Activated T-helper 1 cell treated with anti-CD3 and anti-CD28 coated beads, Interleukin-12 subunit alpha, Interleukin-12 subunit beta, Interleukin-2, Interleukin-4 antibody, amounts not matched to agents 30 ng/mL and 10 ng/mL and 1 ng/mL, durations not matched to agents 14 hours and 24 hours and 36 hours (primary cell): ENCODE measurements at regions of chr11 and their contacts with region 1.

Region 1: DNA sequence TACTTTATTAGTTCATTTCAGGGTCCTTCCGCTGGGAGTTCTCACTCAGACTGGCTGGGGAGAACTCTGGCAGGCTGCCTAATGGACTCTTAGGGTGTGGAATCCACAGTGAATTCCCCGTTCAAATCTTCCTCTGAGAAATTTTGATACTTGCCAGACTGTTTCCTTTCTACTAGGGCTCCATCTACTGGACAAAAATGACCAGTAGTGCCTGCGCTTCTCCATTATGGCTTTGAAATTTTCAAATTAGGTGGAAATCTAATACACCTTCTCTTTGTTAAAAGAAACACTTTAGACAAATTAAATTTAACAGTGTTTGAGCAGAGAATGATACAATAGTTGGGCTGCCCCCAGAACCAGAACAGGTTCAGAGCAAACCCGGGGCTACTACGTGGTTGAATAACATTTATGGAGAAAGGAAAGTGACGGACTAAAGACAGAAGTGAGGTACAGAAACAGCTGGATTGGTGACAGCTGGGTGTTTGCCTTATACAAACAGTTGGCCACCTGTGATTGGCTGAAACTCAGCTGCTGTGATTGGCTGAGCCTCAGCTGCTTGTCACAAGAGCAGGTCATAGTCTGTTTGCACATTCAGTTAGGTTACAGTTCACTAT is 52.9 kb upstream of the FDX1 start:
- DNase-seq: no peak
- H3K4me3 Mint-ChIP-seq: no peak overlapping the region
- H3K27ac Mint-ChIP-seq: no peak overlapping the region
- H3K4me1 Mint-ChIP-seq: peaks cover 40% of the 10 kb centered on the region
- H3K27me3 Mint-ChIP-seq: no peaks in the 10 kb centered on the region

Region 2: GRCh38 chr11:110092515-110093404 is 284.1 kb before region 1 on chr11 and contains the start of gene ZC3H12C:
- intact Hi-C with region 1: loop called (anchors 2 kb)
- DNase-seq: peak; percentile 47
- H3K4me3 Mint-ChIP-seq: peak within 1 kb of the TSS; percentile 87
- H3K27ac Mint-ChIP-seq: peak within 1 kb of the TSS; percentile 93
- H3K4me1 Mint-ChIP-seq: peaks cover 16% of the 10 kb centered on the region
- H3K27me3 Mint-ChIP-seq: peaks cover 56% of the 10 kb centered on the region
- total RNA-seq, gene ZC3H12C: 5.7 and 6.2 TPM in 2 replicates

Region 3: DNA sequence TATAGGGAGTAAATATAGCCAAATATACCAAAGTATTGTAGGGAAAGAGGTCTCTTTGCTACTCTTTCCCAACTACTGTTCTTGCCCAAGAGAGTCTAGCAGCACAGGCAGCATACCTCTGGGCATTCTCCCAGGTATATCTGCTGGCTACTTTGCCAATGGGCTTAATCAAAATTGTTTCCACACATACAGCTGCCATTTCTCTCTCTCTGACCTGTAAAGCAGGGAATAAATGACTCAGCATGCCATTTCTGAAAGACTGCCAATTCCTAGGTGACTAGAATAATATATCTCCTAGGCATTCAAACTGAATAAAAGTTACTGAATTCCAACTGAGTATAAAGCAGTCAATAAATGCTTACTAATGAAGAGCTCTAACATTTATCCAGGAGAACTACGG is 125.0 kb before region 1 on chr11:
- intact Hi-C with region 1: loop called (anchors 5 kb)
- DNase-seq: no peak
- H3K4me3 Mint-ChIP-seq: no peak overlapping the region
- H3K27ac Mint-ChIP-seq: peak overlapping the region; percentile 40
- H3K4me1 Mint-ChIP-seq: peaks cover 14% of the 10 kb centered on the region
- H3K27me3 Mint-ChIP-seq: no peaks in the 10 kb centered on the region

Region 4: GRCh38 chr11:110327508-110327907 is 49.3 kb before region 1 on chr11:
- intact Hi-C with region 1: loop called (anchors 1 kb)
- DNase-seq: no peak
- H3K4me3 Mint-ChIP-seq: peak overlapping the region; percentile 96
- H3K27ac Mint-ChIP-seq: peak overlapping the region; percentile 98
- H3K4me1 Mint-ChIP-seq: peaks cover 49% of the 10 kb centered on the region
- H3K27me3 Mint-ChIP-seq: no peaks in the 10 kb centered on the region

Region 5: DNA sequence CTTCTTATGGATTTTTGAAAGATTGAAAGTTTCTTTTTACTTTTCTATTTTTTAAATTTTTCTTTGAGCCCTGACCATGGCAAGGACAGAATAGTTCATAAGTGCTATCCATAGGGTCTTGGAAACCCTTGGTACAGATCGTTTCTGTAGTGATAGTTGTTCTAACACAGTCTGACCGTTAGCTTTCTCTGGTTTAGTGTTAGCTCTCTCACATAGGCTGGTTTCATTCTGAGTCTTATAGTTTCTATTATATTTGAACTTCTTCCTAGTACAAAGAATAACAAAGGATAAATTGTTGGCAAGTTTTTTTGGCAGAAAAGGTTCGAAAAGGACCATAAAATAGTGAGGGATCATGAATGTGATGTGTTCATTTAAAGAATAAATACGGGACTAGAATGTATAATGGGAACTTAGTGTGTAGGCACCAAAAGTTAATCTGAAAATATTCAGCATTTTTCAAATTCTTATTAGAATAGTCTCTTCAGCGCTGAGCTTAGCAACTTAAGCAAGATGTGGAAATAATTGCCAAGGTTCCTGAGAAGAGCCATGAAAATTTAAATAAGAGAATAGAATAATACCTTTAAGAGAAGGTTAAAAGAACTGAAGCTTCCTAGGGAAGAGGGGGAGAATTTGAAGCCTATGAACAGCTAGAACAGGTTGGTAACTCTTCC is 77.0 kb after region 1 on chr11:
- intact Hi-C with region 1: loop called (anchors 1 kb)
- DNase-seq: no peak
- H3K4me3 Mint-ChIP-seq: peak overlapping the region; percentile 17
- H3K27ac Mint-ChIP-seq: peak overlapping the region; percentile 51
- H3K4me1 Mint-ChIP-seq: peaks cover 52% of the 10 kb centered on the region
- H3K27me3 Mint-ChIP-seq: no peaks in the 10 kb centered on the region